Caco-2 (cell line): ENCODE measurements at regions of chr12 and their contacts with region 1.

Region 1: GRCh38 chr12:46933947-46934346 is 108.2 kb upstream of the SLC38A4 start:
- DNase-seq: peak in 1 of 2 experiments; percentile 59
- H3K4me3 ChIP-seq: no peak overlapping the region
- H3K4me3 Mint-ChIP-seq: no peak overlapping the region
- H3K27ac Mint-ChIP-seq: no peak overlapping the region
- H3K4me1 ChIP-seq: peaks cover 3% of the 10 kb centered on the region; the same call in 1 of the 2 replicates
- H3K4me1 Mint-ChIP-seq: peaks cover 7% of the 10 kb centered on the region
- H3K27me3 ChIP-seq: no peaks in the 10 kb centered on the region
- H3K27me3 Mint-ChIP-seq: no peaks in the 10 kb centered on the region
- CTCF ChIP-seq: peak; percentile 47 to 69

Region 2: GRCh38 chr12:46131729-46132469 is 802.0 kb before region 1 on chr12:
- CTCF ChIA-PET with region 1: no interaction called
- POLR2A ChIA-PET with region 1: no interaction called
- intact Hi-C with region 1: loop called (anchors 10 kb)
- DNase-seq: peak; percentile 49 to 60
- H3K4me3 ChIP-seq: no peak overlapping the region
- H3K4me3 Mint-ChIP-seq: no peak overlapping the region
- H3K27ac Mint-ChIP-seq: no peak overlapping the region
- H3K4me1 ChIP-seq: peaks cover 18% of the 10 kb centered on the region
- H3K4me1 Mint-ChIP-seq: peaks cover 25% of the 10 kb centered on the region
- H3K27me3 ChIP-seq: no peaks in the 10 kb centered on the region
- H3K27me3 Mint-ChIP-seq: peaks cover 5% of the 10 kb centered on the region
- CTCF ChIP-seq: peak; percentile 32 to 78

Region 3: DNA sequence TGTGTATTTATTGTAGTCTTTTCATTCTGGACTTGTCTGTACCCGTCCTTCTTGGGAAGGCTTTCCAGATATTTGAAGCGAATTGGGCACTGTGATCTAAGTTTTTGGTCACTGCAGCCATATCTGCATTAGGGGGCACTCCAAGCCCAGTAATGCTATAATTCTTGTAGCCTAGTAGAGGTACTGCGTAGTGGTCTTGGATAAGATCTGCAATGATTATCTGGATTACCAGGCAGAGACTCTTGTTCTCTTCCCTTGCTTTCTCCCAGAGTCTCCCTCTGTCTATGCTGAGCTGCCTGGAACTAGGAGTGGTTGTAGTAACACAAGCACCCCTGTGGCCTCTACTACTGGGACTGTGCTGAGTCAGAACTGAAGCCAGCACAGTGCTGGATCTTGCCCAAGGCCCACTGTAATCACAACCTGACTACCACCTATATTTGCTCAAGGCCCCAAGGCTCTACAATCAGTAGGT is 591.3 kb before region 1 on chr12:
- CTCF ChIA-PET with region 1: no interaction called
- POLR2A ChIA-PET with region 1: no interaction called
- intact Hi-C with region 1: loop called (anchors 1 kb)
- DNase-seq: peak; percentile 41 to 63
- H3K4me3 ChIP-seq: no peak overlapping the region
- H3K4me3 Mint-ChIP-seq: no peak overlapping the region
- H3K27ac Mint-ChIP-seq: no peak overlapping the region
- H3K4me1 ChIP-seq: no peaks in the 10 kb centered on the region
- H3K4me1 Mint-ChIP-seq: no peaks in the 10 kb centered on the region
- H3K27me3 ChIP-seq: no peaks in the 10 kb centered on the region
- H3K27me3 Mint-ChIP-seq: peaks cover 5% of the 10 kb centered on the region
- CTCF ChIP-seq: peak; percentile 60 to 71

Region 4: GRCh38 chr12:46682148-46682547 is 251.8 kb before region 1 on chr12:
- CTCF ChIA-PET with region 1: no interaction called
- POLR2A ChIA-PET with region 1: no interaction called
- intact Hi-C with region 1: loop called (anchors 1 kb)
- DNase-seq: no peak
- H3K4me3 ChIP-seq: no peak overlapping the region
- H3K4me3 Mint-ChIP-seq: no peak overlapping the region
- H3K27ac Mint-ChIP-seq: no peak overlapping the region
- H3K4me1 ChIP-seq: no peaks in the 10 kb centered on the region
- H3K4me1 Mint-ChIP-seq: no peaks in the 10 kb centered on the region
- H3K27me3 ChIP-seq: no peaks in the 10 kb centered on the region
- H3K27me3 Mint-ChIP-seq: no peaks in the 10 kb centered on the region
- CTCF ChIP-seq: no peak

Region 5: GRCh38 chr12:46770501-46771183 is 163.3 kb before region 1 on chr12:
- CTCF ChIA-PET with region 1: interaction called, 3 read pairs
- POLR2A ChIA-PET with region 1: no interaction called
- intact Hi-C with region 1: loop called (anchors 2 kb)
- DNase-seq: peak; percentile 78 to 83
- H3K4me3 ChIP-seq: no peak overlapping the region
- H3K4me3 Mint-ChIP-seq: peak overlapping the region; percentile 53
- H3K27ac Mint-ChIP-seq: peak overlapping the region; percentile 79
- H3K4me1 ChIP-seq: peaks cover 48% of the 10 kb centered on the region
- H3K4me1 Mint-ChIP-seq: peaks cover 52% of the 10 kb centered on the region
- H3K27me3 ChIP-seq: no peaks in the 10 kb centered on the region
- H3K27me3 Mint-ChIP-seq: no peaks in the 10 kb centered on the region
- CTCF ChIP-seq: no peak

Region 6: DNA sequence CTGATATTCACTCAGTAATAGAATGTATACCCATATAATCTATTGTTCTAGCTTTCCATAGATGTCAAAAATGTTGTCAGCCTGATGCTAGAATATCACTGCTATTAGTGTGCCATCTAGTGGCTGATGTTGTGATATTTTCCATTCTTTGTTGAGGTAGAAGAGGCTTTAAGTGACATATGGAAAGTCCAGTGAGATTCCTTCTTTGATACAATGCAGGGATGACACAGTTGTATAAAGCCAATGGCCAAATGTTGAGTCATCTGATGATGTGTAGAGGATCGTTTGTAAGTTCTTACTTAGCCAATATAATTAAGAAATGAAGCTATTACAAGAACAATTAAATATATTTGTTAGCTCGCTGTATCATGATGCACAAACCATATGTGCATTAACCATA is 87.4 kb after region 1 on chr12:
- CTCF ChIA-PET with region 1: no interaction called
- POLR2A ChIA-PET with region 1: no interaction called
- intact Hi-C with region 1: loop called (anchors 2 kb)
- DNase-seq: peak in 1 of 2 experiments; percentile 74
- H3K4me3 ChIP-seq: no peak overlapping the region
- H3K4me3 Mint-ChIP-seq: no peak overlapping the region
- H3K27ac Mint-ChIP-seq: no peak overlapping the region
- H3K4me1 ChIP-seq: peaks cover 17% of the 10 kb centered on the region
- H3K4me1 Mint-ChIP-seq: peaks cover 22% of the 10 kb centered on the region
- H3K27me3 ChIP-seq: no peaks in the 10 kb centered on the region
- H3K27me3 Mint-ChIP-seq: peaks cover 2% of the 10 kb centered on the region
- CTCF ChIP-seq: peak; percentile 65 to 73